AG04450 (cell line): ENCODE measurements at regions of chr5 and their contacts with region 1.

Region 1: GRCh38 chr5:31232273-31232888 is 38.9 kb downstream of the CDH6 start:
- DNase-seq: peak; percentile 33
- H3K4me3 ChIP-seq: no peak overlapping the region
- H3K27ac ChIP-seq: no peak overlapping the region
- H3K27me3 ChIP-seq: no peaks in the 10 kb centered on the region
- CTCF ChIP-seq: peak; percentile 86

Region 2: GRCh38 chr5:30413540-30413939 is 818.8 kb before region 1 on chr5:
- CTCF ChIA-PET with region 1: interaction called, 15 read pairs
- POLR2A ChIA-PET with region 1: no interaction called
- DNase-seq: no peak
- H3K4me3 ChIP-seq: no peak overlapping the region
- H3K27ac ChIP-seq: no peak overlapping the region
- H3K27me3 ChIP-seq: no peaks in the 10 kb centered on the region
- CTCF ChIP-seq: 0 out of 2 replicates have a peak, but pooled peaks have one; percentile 21

Region 3: GRCh38 chr5:31186672-31187267 is 45.6 kb before region 1 on chr5:
- CTCF ChIA-PET with region 1: interaction called, 14 read pairs
- POLR2A ChIA-PET with region 1: no interaction called
- DNase-seq: peak; percentile 24
- H3K4me3 ChIP-seq: no peak overlapping the region
- H3K27ac ChIP-seq: no peak overlapping the region
- H3K27me3 ChIP-seq: no peaks in the 10 kb centered on the region
- CTCF ChIP-seq: peak; percentile 79

Region 4: DNA sequence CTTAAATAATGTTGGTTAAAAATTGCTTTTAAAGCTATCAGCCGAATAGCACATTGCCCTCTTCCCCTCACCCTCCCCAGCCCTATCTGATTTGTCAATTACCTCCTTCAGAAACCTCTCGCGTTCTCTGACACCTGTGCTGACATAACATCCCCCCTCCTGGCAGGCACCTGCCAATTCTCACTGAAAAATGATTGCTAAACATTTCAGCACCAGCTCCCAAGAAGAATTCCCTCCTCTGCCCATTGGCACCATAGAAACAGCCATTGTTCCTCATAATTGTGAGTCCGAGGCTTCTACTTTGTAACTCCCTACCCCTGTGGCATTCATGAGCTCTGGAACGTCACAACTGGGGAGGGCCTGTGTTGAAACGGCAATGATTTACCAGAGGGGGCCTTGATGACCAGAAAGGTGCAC is 18.7 kb before region 1 on chr5:
- CTCF ChIA-PET with region 1: interaction called, 22 read pairs
- POLR2A ChIA-PET with region 1: no interaction called
- DNase-seq: no peak
- H3K4me3 ChIP-seq: no peak overlapping the region
- H3K27ac ChIP-seq: no peak overlapping the region
- H3K27me3 ChIP-seq: no peaks in the 10 kb centered on the region
- CTCF ChIP-seq: no peak

Region 5: DNA sequence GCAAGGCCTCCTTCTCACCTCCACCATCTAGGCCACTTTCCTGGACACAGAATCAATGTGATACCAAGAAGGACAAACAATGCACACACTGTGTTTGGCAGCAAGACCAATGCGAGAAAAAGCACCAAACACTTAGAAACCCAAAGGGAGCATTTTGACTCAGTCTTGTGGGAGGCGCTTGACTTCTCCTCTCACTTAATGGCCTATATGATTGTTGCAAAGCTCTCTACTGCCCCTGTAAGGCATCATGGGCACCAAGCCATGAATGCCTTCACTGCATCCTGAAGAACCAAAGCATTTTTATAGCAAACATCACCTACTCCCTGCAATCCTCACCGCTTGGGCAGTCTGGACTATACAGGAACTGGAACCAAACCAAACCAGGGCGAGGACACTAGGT is 18.7 kb after region 1 on chr5:
- CTCF ChIA-PET with region 1: interaction called, 19 read pairs
- POLR2A ChIA-PET with region 1: no interaction called
- DNase-seq: no peak
- H3K4me3 ChIP-seq: no peak overlapping the region
- H3K27ac ChIP-seq: no peak overlapping the region
- H3K27me3 ChIP-seq: no peaks in the 10 kb centered on the region
- CTCF ChIP-seq: no peak

Region 6: DNA sequence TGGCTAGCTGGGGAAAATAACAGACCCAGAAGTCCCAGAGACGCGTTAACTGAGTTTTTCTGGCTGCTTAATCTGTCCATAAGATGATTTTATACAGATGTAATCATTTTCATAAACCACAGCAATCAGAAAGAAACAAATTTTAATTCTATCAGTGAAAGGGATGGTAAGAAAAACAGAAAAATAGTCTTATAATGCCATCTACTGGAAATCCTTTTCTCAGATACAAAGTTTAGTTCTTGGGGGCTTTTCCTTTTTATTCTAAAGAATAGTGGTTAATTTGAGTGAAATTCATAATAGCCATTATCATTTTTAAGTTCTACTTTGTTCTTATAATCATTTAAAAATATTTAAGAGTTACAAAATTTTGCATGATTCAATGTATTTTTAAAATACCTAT is 255.1 kb after region 1 on chr5:
- CTCF ChIA-PET with region 1: interaction called, 20 read pairs
- POLR2A ChIA-PET with region 1: no interaction called
- DNase-seq: no peak
- H3K4me3 ChIP-seq: no peak overlapping the region
- H3K27ac ChIP-seq: no peak overlapping the region
- H3K27me3 ChIP-seq: no peaks in the 10 kb centered on the region
- CTCF ChIP-seq: 0 out of 2 replicates have a peak, but pooled peaks have one; percentile 15